Common myeloid progenitor, CD34-positive (primary cell): ENCODE measurements at regions of chr14 and their contacts with region 1.

Region 1: DNA sequence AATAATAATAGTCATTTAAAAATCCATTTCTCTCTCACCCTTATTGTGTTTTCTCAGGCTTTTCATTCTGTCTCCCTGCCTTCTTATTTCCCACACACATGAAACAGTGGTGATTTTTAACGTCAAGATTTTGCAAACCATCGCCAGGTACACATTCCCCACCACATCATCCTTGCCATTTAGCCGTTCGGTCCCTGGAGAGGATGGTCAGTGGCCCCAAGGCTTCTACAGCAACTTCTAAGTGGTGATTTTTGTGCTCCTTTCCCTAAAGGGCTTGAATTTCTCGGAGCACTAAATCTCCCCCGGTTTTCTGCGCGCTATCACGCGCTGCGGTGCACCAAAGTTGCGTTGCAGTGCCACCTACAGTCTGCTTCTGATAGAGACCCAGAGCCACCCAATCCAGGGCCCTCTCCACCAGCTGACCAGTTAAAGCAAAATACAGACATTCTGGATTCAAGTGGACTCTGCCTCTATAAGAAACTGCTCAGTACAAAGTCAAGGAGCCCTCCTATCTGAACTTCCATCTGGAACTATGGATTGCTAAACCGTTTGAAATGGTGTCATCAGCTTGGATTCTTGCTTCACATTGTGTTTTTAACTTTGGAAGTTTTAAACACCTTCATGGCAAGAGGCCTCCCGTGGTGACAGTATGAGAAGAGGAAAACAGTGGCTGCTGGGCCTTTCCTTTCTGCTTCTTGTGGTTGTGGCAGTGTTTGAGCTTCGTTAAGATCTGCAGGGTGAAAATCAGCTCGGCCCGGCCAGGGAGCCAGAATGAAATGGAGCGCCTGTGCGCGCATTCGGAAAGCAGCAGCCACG is 234.0 kb downstream of the SPTSSA start:
- DNase-seq: peak; percentile 28 to 62 (median 56)
- H3K4me3 ChIP-seq: no peak overlapping the region
- H3K27ac ChIP-seq: no peak overlapping the region
- H3K4me1 ChIP-seq: peaks cover 0 to 3% (median 0%) of the 10 kb centered on the region in 4 experiments
- H3K27me3 ChIP-seq: peaks cover 0 to 23% (median 9%) of the 10 kb centered on the region in 5 experiments

Region 2: DNA sequence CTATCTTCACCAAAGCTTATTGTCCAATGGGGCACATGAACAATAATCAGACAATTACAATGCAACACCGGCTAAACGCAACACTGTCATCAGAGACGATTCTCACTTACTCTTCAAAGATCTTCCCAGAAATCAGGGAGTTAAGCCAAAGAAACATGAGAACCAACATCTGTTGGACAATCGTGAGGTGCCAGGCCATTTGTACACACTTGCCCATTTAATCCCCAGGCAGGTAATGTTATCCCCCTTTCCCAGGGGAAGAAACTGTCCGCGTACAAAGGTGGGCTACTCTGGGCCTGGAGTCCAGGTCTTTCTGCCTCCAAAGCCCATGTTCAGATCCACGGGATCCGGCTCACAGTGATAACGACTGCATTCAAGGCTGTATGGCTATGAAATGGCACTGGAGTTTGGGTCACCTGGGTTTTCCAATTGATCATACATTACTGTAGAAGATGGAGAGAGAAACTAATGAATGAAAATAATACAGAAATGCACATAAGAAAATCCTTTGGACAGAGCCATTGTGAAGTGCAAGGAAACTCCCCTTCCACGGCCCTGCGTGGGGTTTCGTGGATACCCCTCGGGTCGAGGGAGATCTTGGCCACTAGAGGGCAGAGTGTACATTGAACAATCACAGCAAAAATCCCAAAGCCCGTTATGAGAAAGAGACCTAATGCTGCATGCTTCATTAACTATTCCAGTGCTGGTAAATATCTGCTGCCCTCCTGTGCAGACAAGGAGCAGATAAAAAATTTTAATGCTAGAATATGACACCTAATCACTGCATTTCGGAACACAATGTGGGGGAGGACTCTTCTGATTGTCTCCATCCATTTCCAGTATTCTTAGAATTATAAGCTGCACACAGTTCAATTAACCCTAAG is 388.6 kb before region 1 on chr14:
- CTCF ChIA-PET with region 1: interaction called, 10 read pairs
- POLR2A ChIA-PET with region 1: no interaction called
- DNase-seq: peak; percentile 54 to 76 (median 68)
- H3K4me3 ChIP-seq: no peak overlapping the region
- H3K27ac ChIP-seq: no peak overlapping the region
- H3K4me1 ChIP-seq: peaks cover 0 to 4% (median 0%) of the 10 kb centered on the region in 4 experiments
- H3K27me3 ChIP-seq: no peaks in the 10 kb centered on the region

Region 3: DNA sequence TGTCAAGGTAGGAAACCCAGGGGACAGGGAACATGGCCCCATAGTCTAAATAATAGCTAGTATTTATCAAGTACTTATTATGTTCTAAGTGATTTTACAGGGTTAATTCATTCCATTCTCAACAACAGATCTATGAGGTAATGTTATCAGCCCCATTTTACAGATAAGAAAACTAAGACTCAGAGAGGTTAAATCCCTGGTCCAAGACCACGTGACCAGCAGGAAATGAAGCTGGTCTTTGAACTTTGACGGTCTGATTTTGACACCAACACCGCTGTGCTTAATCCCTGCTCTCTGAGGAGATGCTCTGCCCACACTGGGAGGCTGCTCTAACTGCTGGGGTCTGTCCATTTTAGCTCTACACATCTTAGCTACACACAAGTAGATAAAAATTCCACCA is 19.5 kb before region 1 on chr14:
- CTCF ChIA-PET with region 1: no interaction called
- POLR2A ChIA-PET with region 1: no interaction called
- DNase-seq: no peak
- H3K4me3 ChIP-seq: no peak overlapping the region
- H3K27ac ChIP-seq: no peak overlapping the region
- H3K4me1 ChIP-seq: no peaks in the 10 kb centered on the region
- H3K27me3 ChIP-seq: peaks cover 3 to 79% (median 39%) of the 10 kb centered on the region in 5 experiments

Region 4: DNA sequence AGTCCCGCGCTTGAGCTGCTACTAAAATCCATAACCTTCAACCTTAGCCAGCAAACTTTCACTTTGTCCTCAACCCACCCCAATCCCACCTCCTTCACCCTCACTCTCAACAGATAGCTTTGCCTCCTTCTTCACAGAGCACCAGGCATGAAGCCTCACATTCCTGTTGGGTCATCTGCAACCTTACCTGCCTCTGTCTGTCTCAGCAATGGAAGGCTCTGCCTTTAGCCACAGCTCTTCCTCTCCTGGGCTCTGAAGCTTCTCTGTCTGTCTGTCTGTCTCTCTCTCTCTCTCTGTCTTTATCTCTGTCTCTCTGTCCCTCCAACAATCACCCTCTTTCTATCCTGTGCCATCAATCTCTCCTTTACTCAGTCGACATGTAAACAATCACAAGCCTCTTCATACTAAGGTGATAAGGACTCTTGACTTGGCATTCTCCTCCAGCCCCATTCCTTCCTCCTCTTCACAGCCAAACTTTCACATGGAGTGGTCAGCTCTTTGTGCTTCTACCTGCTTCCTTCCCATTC is 13.2 kb after region 1 on chr14:
- CTCF ChIA-PET with region 1: interaction called, 11 read pairs
- POLR2A ChIA-PET with region 1: no interaction called
- DNase-seq: no peak
- H3K4me3 ChIP-seq: no peak overlapping the region
- H3K27ac ChIP-seq: no peak overlapping the region
- H3K4me1 ChIP-seq: no peaks in the 10 kb centered on the region
- H3K27me3 ChIP-seq: peaks cover 0 to 4% (median 0%) of the 10 kb centered on the region in 5 experiments